PC-9 (cell line): ENCODE measurements at regions of chr20 and their contacts with region 1.

Region 1: GRCh38 chr20:18466894-18467730 is at the starts of genes DZANK1 and POLR3F:
- DNase-seq: peak; percentile 86 to 96
- H3K4me3 ChIP-seq: peak within 1 kb of the TSS; percentile 97
- H3K27ac ChIP-seq: peak within 1 kb of the TSS; percentile 52
- H3K4me1 ChIP-seq: peaks cover 16% of the 10 kb centered on the region
- H3K27me3 ChIP-seq: no peaks in the 10 kb centered on the region
- CTCF ChIP-seq: no peak
- total RNA-seq, gene DZANK1: 4.4 and 7.3 TPM in 2 replicates
- total RNA-seq, gene POLR3F: 7.4 and 9.6 TPM in 2 replicates

Region 2: GRCh38 chr20:18287915-18288748 is 179.0 kb before region 1 on chr20 and contains the start of gene ZNF133:
- CTCF ChIA-PET with region 1: no interaction called
- POLR2A ChIA-PET with region 1: no interaction called
- intact Hi-C with region 1: loop called (anchors 2 kb)
- DNase-seq: peak; percentile 93 to 98
- H3K4me3 ChIP-seq: peak within 1 kb of the TSS; percentile 87
- H3K27ac ChIP-seq: peak within 1 kb of the TSS; percentile 92
- H3K4me1 ChIP-seq: peaks cover 18% of the 10 kb centered on the region
- H3K27me3 ChIP-seq: no peaks in the 10 kb centered on the region
- CTCF ChIP-seq: no peak
- total RNA-seq, gene ZNF133: 16.3 and 22.8 TPM in 2 replicates